H1 (cell line): ENCODE measurements at regions of chr6 and their contacts with region 1.

Region 1: DNA sequence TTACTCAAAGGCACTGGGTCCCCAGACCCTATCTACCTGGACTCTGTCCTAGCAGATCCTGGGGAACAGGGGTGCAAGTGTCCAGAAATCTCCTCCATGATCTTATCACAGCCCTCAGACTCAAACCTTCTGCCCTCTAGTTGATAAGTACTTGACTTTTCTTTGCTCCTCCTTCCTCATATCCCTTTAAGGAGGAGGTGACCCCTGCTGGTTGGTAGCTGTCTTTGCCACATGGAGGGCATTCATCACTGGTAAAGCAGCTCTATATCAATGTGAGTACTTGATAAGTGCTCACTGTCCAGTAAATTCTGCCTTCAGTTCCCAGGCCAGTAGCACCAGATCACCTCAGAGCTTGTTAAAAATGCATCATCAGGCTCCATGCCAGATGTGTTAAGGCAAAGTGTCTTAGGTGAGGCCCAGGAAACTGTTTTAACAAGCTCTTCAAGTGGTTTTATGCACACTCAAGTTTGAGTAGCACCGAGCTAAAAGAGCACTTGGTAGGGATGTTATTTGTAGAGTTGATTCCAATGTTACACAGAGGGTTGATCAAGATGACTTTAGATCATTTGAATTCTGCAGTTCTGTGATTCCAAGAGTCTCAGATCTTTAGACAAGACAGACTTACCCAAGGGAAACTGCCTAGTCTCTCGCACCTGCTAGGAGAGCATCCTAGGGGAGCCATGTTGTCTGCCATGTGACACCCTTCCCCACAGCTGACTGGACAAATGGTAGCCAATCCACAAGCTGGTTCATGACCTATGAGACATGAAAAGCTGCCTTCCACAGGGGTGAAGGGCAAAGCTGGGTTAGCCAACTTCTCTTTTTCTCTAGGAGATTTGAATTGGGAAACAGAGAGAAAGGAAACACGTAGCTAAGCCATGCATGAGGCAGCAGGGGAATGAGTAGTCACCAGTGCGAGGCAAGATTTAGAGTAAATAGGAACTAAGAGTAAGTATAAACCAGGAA is 18.6 kb downstream of the TREML2 start:
- DNase-seq: peak in 1 of 2 experiments; percentile 53
- H3K4me3 ChIP-seq: no peak overlapping the region
- H3K27ac ChIP-seq: no peak overlapping the region
- H3K4me1 ChIP-seq: peaks cover 0 to 4% (median 0%) of the 10 kb centered on the region in 4 experiments; a peak in 1 of 7 replicates
- H3K27me3 ChIP-seq: no peaks in the 10 kb centered on the region
- CTCF ChIP-seq: peak; percentile 17 to 90 (median 73)
- EP300 ChIP-seq: no peak
- POLR2A ChIP-seq: no peak
- RAD21 ChIP-seq: peak; percentile 69 to 81

Region 2: DNA sequence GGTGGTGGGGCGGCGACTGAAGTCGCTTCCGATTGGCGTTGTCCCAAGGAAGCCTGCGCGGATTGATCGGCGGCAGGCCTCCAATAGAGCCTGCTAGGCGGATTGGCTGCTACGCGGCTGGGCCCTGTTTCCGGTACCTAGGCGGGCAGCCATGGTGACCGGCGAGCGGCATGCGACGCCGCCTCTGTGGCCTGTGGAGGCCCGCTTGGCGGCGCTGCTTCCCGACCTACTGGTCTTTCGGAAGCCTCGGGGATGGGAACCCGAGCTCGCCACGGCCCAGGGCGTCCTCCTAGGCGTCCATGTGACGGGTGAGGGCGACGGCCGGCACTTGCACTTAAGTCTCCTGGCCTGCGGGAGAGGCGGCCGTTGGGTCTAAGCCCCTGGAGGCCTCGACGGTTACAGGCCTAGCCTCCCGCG is 81.5 kb before region 1 on chr6:
- CTCF ChIA-PET with region 1: interaction called, 66 read pairs
- POLR2A ChIA-PET with region 1: interaction called, 5 read pairs
- DNase-seq: peak; percentile 60 to 87
- H3K4me3 ChIP-seq: peak overlapping the region in 1 of 4 experiments; percentile 37; a peak in 2 of 8 replicates
- H3K27ac ChIP-seq: no peak overlapping the region
- H3K4me1 ChIP-seq: peaks cover 0 to 2% (median 0%) of the 10 kb centered on the region in 4 experiments; a peak in 1 of 7 replicates
- H3K27me3 ChIP-seq: peaks cover 0 to 6% (median 3%) of the 10 kb centered on the region in 4 experiments; a peak in 2 of 7 replicates
- CTCF ChIP-seq: peak; percentile 78 to 91 (median 78)
- EP300 ChIP-seq: no peak
- POLR2A ChIP-seq: peak in 1 of 2 experiments; percentile 44; a peak in 1 of 3 replicates
- RAD21 ChIP-seq: peak; percentile 76 to 89

Region 3: DNA sequence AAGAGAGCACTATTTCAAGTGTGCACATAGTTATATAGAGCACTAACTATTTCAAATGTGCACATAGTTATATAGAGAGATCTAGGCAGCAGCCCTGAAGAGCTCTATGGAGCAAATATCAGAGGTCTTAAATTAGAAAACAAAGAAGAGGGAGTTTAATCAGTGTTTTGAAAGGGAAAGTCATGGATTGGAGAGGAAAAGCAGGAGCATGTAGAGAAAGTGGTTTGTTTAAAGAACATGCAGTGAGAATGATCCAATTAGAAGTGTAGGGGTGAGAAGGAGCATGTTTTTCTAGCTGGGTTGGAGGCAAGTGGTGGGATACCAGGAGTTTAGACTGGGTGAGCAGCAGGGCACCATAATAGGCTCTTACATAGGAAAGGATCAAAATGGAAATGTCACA is 45.4 kb before region 1 on chr6:
- CTCF ChIA-PET with region 1: interaction called, 10 read pairs
- POLR2A ChIA-PET with region 1: interaction called, 4 read pairs
- DNase-seq: no peak
- H3K4me3 ChIP-seq: no peak overlapping the region
- H3K27ac ChIP-seq: no peak overlapping the region
- H3K4me1 ChIP-seq: no peaks in the 10 kb centered on the region; a peak in 1 of 7 replicates
- H3K27me3 ChIP-seq: no peaks in the 10 kb centered on the region
- CTCF ChIP-seq: no peak
- EP300 ChIP-seq: no peak
- POLR2A ChIP-seq: no peak
- RAD21 ChIP-seq: no peak

Region 4: DNA sequence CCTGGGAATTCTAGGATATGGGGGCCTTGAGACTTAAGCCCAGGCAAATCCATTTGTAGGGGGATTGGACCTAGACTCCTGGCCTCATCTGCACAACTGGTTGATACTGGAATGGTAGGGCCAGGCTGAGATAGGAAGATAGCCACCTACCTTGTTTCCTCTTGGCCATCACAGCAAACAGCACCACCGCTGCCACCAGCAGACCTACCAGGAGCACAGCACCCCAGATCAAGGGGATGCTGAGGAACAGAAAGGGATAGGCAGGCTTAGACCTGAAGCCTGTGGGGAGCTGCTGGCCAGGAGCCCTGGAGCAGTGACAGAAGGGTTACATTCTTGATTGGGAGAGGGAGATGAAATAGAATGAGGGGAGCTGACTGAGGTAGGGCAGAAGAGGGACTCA is 31.7 kb before region 1 on chr6:
- CTCF ChIA-PET with region 1: interaction called, 11 read pairs
- POLR2A ChIA-PET with region 1: no interaction called
- DNase-seq: no peak
- H3K4me3 ChIP-seq: no peak overlapping the region
- H3K27ac ChIP-seq: no peak overlapping the region
- H3K4me1 ChIP-seq: peaks cover 0 to 6% (median 0%) of the 10 kb centered on the region in 4 experiments; a peak in 1 of 7 replicates
- H3K27me3 ChIP-seq: no peaks in the 10 kb centered on the region
- CTCF ChIP-seq: peak in 2 of 3 experiments; percentile 28 to 44; a peak in 2 of 4 replicates
- EP300 ChIP-seq: no peak
- POLR2A ChIP-seq: no peak
- RAD21 ChIP-seq: peak in 1 of 2 experiments; percentile 41; a peak in 2 of 4 replicates

Region 5: GRCh38 chr6:41167173-41167963 is 15.0 kb before region 1 on chr6:
- CTCF ChIA-PET with region 1: interaction called, 31 read pairs
- POLR2A ChIA-PET with region 1: interaction called, 5 read pairs
- DNase-seq: peak in 1 of 2 experiments; percentile 72
- H3K4me3 ChIP-seq: no peak overlapping the region
- H3K27ac ChIP-seq: no peak overlapping the region
- H3K4me1 ChIP-seq: peaks cover 0 to 12% (median 8%) of the 10 kb centered on the region in 4 experiments; a peak in 5 of 7 replicates
- H3K27me3 ChIP-seq: no peaks in the 10 kb centered on the region
- CTCF ChIP-seq: no peak
- EP300 ChIP-seq: peak in 1 of 2 experiments; percentile 67; a peak in 1 of 3 replicates
- POLR2A ChIP-seq: no peak
- RAD21 ChIP-seq: no peak

Region 6: DNA sequence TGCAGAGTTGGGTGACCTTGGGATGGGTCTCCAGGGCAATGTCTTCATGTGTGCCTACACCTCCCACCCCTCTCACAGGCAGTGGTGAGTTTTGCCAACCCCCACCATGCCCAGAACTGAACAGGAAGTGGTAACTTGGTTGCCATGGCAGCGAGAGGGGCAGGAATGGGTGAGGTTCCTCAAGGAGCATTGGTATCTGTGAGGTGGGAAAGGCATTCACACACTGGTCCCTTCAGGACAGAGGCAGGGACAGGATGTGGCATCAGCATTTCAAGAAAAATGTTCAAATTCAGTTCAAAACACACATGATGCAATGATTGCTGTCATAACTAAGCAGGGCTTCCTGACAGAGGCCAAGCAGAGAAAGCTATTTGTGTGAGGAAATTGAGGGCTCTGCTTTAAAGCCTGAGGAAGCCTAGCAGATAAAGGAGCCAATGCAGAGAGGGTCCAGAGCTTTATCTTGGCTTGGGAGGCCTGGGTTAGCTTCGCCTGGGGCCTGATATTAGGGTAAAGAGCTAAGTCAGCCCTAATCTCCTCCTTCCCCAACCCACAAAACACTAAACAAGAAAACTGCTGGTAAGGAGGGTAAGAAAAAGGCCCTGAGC is 18.0 kb after region 1 on chr6:
- CTCF ChIA-PET with region 1: interaction called, 48 read pairs
- POLR2A ChIA-PET with region 1: no interaction called
- DNase-seq: peak in 1 of 2 experiments; percentile 44
- H3K4me3 ChIP-seq: no peak overlapping the region
- H3K27ac ChIP-seq: no peak overlapping the region
- H3K4me1 ChIP-seq: peaks cover 0 to 7% (median 3%) of the 10 kb centered on the region in 4 experiments; a peak in 5 of 7 replicates
- H3K27me3 ChIP-seq: no peaks in the 10 kb centered on the region; a peak in 1 of 7 replicates
- CTCF ChIP-seq: no peak
- EP300 ChIP-seq: no peak
- POLR2A ChIP-seq: no peak
- RAD21 ChIP-seq: no peak